Pancreas (tissue), 10 donors: ENCODE measurements at regions of chr12 and their contacts with region 1.

Region 1: DNA sequence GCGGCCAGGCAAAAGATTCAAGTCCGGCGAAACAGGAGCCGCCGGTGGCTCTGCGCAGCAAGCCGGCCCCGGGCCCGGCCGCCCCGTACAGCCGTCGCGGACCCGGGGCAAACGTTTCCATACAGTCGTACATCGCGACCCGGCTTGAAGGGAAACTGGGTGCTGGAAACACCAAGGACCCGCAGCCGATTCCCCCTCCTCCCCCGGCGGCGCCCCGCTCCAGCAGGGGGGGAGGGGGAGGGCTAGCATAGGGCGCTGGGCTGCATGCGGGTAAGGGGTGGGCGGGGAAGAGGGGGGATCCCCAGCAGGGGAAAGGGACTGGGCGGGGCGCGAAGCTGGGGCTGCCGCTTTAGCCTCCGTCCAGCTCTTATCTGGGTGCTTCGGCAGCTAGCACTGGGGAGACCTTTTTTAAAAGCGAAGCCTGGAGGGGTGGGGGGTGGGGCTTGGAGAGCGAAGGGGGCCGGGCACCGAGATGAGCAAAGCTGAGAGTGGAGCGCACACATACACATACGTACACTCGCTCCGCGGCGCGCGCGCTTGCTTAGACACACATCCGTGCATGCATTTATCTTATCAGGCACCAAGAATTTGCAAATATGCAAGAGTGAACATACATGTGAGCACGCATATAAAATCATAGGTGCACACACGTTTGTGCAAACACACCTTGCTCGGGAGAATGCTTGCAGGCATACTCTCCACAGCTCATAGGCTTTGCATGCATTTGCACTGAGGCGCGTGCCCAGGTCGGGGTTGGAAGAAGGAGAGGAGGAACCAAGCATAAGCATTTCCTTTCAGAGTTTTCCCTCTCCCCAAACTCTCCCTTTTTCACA is 11.8 kb downstream of the RARG start:
- DNase-seq: peak in 5 of 6 donors; percentile 44 to 75 (median 50)
- ATAC-seq: peak; percentile 12 to 34 (median 31)
- H3K4me3 ChIP-seq: peak overlapping the region; percentile 42 to 66 (median 54)
- H3K27ac ChIP-seq: peak overlapping the region; percentile 97 to 98 (median 97)
- H3K4me1 ChIP-seq: peaks cover 0 to 21% (median 5%) of the 10 kb centered on the region in 3 donors
- H3K27me3 ChIP-seq: no peaks in the 10 kb centered on the region
- CTCF ChIP-seq: no peak

Region 2: GRCh38 chr12:52924764-52925716 is 295.1 kb before region 1 on chr12:
- intact Hi-C with region 1: no loop called
- DNase-seq: peak in 3 of 6 donors; percentile 39 to 48 (median 45)
- ATAC-seq: peak; percentile 15 to 52 (median 32)
- H3K4me3 ChIP-seq: no peak overlapping the region
- H3K27ac ChIP-seq: peak overlapping the region; percentile 88 to 91 (median 90)
- H3K4me1 ChIP-seq: peaks cover 14 to 33% (median 31%) of the 10 kb centered on the region in 3 donors
- H3K27me3 ChIP-seq: no peaks in the 10 kb centered on the region
- CTCF ChIP-seq: no peak

Region 3: GRCh38 chr12:53251477-53252348 is 31.5 kb after region 1 on chr12:
- intact Hi-C with region 1: loop called in 2 of 3 experiments (anchors 5 kb)
- DNase-seq: peak; percentile 80 to 92 (median 84)
- ATAC-seq: peak; percentile 88 to 95 (median 90)
- H3K4me3 ChIP-seq: peak overlapping the region; percentile 68 to 89 (median 78)
- H3K27ac ChIP-seq: peak overlapping the region; percentile 75 to 91 (median 80)
- H3K4me1 ChIP-seq: peaks cover 6 to 19% (median 17%) of the 10 kb centered on the region in 3 donors
- H3K27me3 ChIP-seq: no peaks in the 10 kb centered on the region
- CTCF ChIP-seq: no peak

Region 4: GRCh38 chr12:53424626-53425514 is 204.7 kb after region 1 on chr12:
- intact Hi-C with region 1: no loop called
- DNase-seq: peak; percentile 51 to 81 (median 58)
- ATAC-seq: peak; percentile 59 to 84 (median 71)
- H3K4me3 ChIP-seq: peak overlapping the region in 2 of 4 donors; percentile 10 to 13
- H3K27ac ChIP-seq: peak overlapping the region in 3 of 4 donors; percentile 52 to 69 (median 60)
- H3K4me1 ChIP-seq: peaks cover 7 to 22% (median 9%) of the 10 kb centered on the region in 3 donors
- H3K27me3 ChIP-seq: no peaks in the 10 kb centered on the region
- CTCF ChIP-seq: no peak